Ascending aorta (tissue), 2 donors: ENCODE measurements at regions of chr15 and their contacts with region 1.

Region 1: DNA sequence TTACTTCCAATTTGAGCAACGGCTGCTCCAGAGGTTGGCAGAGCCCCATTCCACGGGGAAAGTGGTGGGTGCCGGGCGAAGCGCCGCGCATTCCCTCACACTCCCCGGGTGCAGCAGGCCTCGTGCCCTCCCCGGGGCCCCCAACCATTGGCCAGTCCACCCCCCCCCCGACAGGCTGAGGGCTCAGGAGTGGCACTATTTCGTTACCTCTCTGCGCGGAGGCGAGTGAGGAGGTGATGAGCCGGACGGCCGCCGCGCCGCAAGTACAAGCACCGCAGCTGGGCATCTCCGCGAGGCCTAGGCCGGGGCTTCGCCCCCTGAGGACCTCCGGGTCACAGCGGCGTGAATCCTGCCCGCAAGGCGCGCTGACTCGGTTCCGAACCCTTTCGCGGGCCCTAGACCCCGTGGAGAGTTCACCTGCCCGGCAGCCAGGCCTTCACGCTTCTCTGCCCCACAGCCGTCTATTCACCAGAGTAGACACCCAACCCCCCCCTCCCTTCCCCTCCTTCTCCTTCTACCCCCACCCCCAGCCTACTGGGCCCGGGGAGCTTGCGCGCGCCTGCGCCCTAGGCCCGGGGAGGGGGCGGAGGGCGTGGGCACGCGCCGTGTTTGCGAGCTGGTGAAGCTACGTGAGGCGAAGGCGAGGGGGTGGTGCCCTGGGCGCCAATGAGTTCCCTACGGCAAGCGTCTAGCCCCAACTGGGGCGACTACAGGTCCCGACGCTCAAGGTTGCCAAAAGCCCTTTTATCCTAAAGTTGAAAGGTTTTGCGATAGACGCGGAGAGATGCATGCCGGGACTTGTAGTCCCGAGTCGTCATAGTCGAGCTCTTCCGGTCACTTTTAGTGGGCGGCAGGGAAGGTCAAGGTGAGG is at the start of gene CLPX:
- DNase-seq: peak; percentile 76 to 96
- H3K4me3 ChIP-seq: peak within 1 kb of the TSS; percentile 88 to 90
- H3K27ac ChIP-seq: peak within 1 kb of the TSS; percentile 94 to 95
- H3K4me1 ChIP-seq: peaks cover 4 to 18% of the 10 kb centered on the region in 2 donors
- H3K27me3 ChIP-seq: no peaks in the 10 kb centered on the region
- CTCF ChIP-seq: no peak
- total RNA-seq, gene CLPX: 13.7 TPM

Region 2: GRCh38 chr15:65049418-65049840 is 135.7 kb before region 1 on chr15:
- intact Hi-C with region 1: loop called (anchors 5 kb)
- DNase-seq: peak; percentile 72 to 93
- H3K4me3 ChIP-seq: peak overlapping the region in 1 of 2 donors; percentile 43
- H3K27ac ChIP-seq: peak overlapping the region in 1 of 2 donors; percentile 46
- H3K4me1 ChIP-seq: peaks cover 0 to 4% of the 10 kb centered on the region in 2 donors
- H3K27me3 ChIP-seq: no peaks in the 10 kb centered on the region
- CTCF ChIP-seq: no peak

Region 3: DNA sequence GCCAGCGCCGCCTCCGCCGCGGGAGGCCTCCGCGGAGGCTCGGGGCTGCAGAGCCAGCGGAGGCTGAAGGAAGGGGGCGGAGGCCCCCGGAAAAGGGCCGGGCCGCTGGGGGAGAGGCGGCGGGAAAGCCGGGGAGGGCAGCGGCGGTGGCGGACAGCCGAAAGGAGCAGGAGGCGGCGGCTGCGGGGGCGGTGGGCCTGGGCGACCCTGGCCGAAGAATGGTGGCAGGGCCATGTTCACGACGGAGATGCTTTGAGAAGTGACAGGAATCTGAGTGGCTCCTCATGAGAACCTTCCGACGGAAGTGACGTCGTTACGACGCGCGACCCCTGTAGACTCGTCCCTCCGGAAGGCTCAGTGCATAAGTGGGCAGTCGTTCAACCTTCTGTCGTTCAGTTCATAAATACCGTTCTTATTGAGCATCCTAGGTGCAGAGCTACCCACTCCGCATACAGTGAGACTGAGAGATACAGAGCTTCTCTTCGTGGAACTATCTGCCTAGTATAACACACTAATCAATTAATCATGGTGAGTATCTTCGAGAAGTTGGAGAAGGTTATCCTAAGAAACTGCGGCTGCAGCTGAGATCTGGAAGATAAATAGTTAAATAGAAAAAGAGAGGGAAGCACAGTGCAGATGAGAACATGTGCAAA is 51.4 kb before region 1 on chr15 and contains the start of gene PDCD7:
- intact Hi-C with region 1: loop called (anchors 1 kb)
- DNase-seq: peak; percentile 44 to 92
- H3K4me3 ChIP-seq: peak within 1 kb of the TSS; percentile 75 to 87
- H3K27ac ChIP-seq: peak within 1 kb of the TSS; percentile 83 to 88
- H3K4me1 ChIP-seq: peaks cover 0 to 19% of the 10 kb centered on the region in 2 donors
- H3K27me3 ChIP-seq: no peaks in the 10 kb centered on the region
- CTCF ChIP-seq: no peak
- total RNA-seq, gene PDCD7: 9.2 TPM

Region 4: GRCh38 chr15:65286704-65287519 is 101.8 kb after region 1 on chr15 and contains the start of gene PARP16:
- intact Hi-C with region 1: loop called (anchors 2 kb)
- DNase-seq: peak; percentile 76 to 95
- H3K4me3 ChIP-seq: peak within 1 kb of the TSS; percentile 85 to 95
- H3K27ac ChIP-seq: peak within 1 kb of the TSS; percentile 87 to 92
- H3K4me1 ChIP-seq: peaks cover 0 to 19% of the 10 kb centered on the region in 2 donors
- H3K27me3 ChIP-seq: no peaks in the 10 kb centered on the region
- CTCF ChIP-seq: peak; percentile 33 to 62 (median 52)
- total RNA-seq, gene PARP16: 2.9 TPM

Region 5: GRCh38 chr15:65304389-65305144 is 119.5 kb after region 1 on chr15 and contains the start of gene RNU5B-1:
- intact Hi-C with region 1: loop called (anchors 1 kb)
- DNase-seq: peak in 1 of 2 donors; percentile 85
- H3K4me3 ChIP-seq: peak within 1 kb of the TSS; percentile 58 to 73
- H3K27ac ChIP-seq: peak within 1 kb of the TSS; percentile 81 to 85
- H3K4me1 ChIP-seq: peaks cover 0 to 9% of the 10 kb centered on the region in 2 donors
- H3K27me3 ChIP-seq: no peaks in the 10 kb centered on the region
- CTCF ChIP-seq: peak; percentile 74 to 87 (median 79)
- total RNA-seq, gene RNU5B-1: not detected